ENCODE measurements at regions of chr11 and their contacts with region 1.

Region 1: GRCh38 chr11:16820324-16821092 is 82.1 kb downstream of the C11orf58 start:
- DNase-seq: peak; percentile 65 to 93 (median 81)
- ATAC-seq: peak; percentile 84
- H3K4me3 ChIP-seq: no peak overlapping the region
- H3K4me1 ChIP-seq: peaks cover 5% of the 10 kb centered on the region
- CTCF ChIP-seq: peak; percentile 74

Region 2: GRCh38 chr11:16785520-16786128 is 34.9 kb before region 1 on chr11:
- intact Hi-C with region 1: loop called in 1 of 2 experiments (anchors 5 kb)
- DNase-seq: peak in 2 of 3 donors; percentile 64 to 78
- ATAC-seq: peak; percentile 78
- H3K4me3 ChIP-seq: no peak overlapping the region
- H3K4me1 ChIP-seq: no peaks in the 10 kb centered on the region
- CTCF ChIP-seq: peak; percentile 78